ENCODE measurements at regions of chr20 and their contacts with region 1.

Region 1: DNA sequence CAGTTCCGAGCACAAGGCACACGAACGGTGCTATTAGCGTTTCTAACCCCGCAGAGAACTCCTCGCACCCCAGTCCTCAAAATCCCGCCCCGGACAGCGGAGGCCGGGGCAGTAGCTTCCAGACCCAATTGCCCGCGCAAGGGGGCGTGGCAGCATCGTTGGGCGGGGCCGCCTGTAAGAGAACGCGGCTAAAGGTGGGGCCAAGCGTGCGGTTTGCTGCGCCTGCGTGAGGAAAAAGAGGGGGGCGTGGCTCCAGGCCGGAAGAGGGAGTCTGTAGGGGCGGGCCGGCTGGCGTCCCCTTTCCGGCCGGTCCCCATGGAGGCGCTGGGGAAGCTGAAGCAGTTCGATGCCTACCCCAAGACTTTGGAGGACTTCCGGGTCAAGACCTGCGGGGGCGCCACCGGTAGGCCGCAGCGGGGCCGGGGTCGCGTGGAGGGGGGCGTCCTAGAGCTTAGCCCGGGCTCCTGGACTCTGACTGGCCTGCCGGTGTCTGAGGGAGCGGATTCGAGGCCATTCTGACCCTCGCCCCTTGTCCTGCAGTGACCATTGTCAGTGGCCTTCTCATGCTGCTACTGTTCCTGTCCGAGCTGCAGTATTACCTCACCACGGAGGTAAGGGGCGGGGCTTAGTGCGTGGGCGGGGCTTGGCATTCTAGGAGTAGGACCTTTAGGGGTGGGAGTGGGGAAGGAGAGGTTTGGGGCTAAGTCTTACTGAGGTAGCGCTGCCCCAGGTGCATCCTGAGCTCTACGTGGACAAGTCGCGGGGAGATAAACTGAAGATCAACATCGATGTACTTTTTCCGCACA is at the start of gene ERGIC3:
- DNase-seq: peak; percentile 99
- H3K4me3 Mint-ChIP-seq: peak within 1 kb of the TSS; percentile 86
- H3K27ac Mint-ChIP-seq: peak within 1 kb of the TSS; percentile 79
- H3K4me1 Mint-ChIP-seq: peaks cover 20% of the 10 kb centered on the region
- H3K27me3 Mint-ChIP-seq: no peaks in the 10 kb centered on the region
- total RNA-seq, gene ERGIC3: 109 to 120 TPM

Region 2: GRCh38 chr20:35454881-35455609 is 86.9 kb before region 1 on chr20 and contains the start of gene CEP250:
- CTCF ChIA-PET with region 1: interaction called, 3 read pairs
- POLR2A ChIA-PET with region 1: interaction called, 3 read pairs
- intact Hi-C with region 1: loop called (anchors 5 kb)
- DNase-seq: peak; percentile 95
- H3K4me3 Mint-ChIP-seq: peak within 1 kb of the TSS; percentile 88
- H3K27ac Mint-ChIP-seq: peak within 1 kb of the TSS; percentile 97
- H3K4me1 Mint-ChIP-seq: peaks cover 28% of the 10 kb centered on the region
- H3K27me3 Mint-ChIP-seq: no peaks in the 10 kb centered on the region
- total RNA-seq, gene CEP250: 47.2 to 60.8 TPM

Measured in activated CD4-positive, alpha-beta memory T cell treated with anti-CD3 and anti-CD28 coated beads for 36 hours (primary cell).